ENCODE measurements at regions of chr17 and their contacts with region 1.

Region 1: GRCh38 chr17:42067351-42068091 is 17.1 kb upstream of the C17orf113 start:
- DNase-seq: peak; percentile 48 to 67
- ATAC-seq: peak in 4 of 8 donors; percentile 40 to 53 (median 42)
- H3K4me3 ChIP-seq: no peak overlapping the region
- H3K27ac ChIP-seq: no peak overlapping the region
- H3K4me1 ChIP-seq: peaks cover 0 to 17% (median 6%) of the 10 kb centered on the region in 9 donors
- H3K27me3 ChIP-seq: peaks cover 0 to 21% (median 17%) of the 10 kb centered on the region in 7 donors
- CTCF ChIP-seq: peak; percentile 78 to 96 (median 88)

Region 2: DNA sequence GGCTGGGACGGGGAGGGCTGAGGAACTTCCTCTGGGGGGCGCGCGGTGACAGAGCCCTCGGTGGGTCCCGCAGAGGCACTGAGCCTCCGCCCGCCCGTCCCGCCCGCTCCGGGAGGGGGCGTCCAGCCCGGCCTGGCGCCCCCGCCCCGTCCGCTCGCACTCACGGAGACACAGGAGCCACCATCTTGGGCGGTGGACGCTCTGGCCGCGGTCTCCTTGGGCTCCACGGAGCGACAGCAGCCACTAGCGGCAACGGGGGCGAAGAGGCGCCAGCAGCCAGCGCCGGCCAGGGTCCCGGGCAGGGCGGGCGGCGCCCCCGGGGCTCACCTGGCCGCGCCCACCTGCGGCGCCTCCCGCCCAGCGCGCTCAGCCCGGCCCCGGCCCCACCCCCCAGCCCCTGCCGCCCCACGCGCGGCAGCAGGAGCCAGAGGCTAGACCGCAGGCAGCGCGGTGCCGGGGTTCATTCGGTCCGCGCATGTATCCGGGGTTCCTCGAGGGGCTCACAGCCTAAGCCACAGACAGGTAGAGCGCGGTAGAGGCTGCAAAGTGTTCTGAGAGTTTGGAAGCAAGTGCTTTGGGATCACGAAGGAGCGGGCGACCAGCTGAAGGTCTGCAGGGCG is 17.0 kb before region 1 on chr17 and contains the start of gene C17orf113:
- intact Hi-C with region 1: loop called in 1 of 10 experiments (anchors 1 kb)
- DNase-seq: peak; percentile 50 to 59
- ATAC-seq: peak; percentile 65 to 90 (median 79)
- H3K4me3 ChIP-seq: peak within 1 kb of the TSS; percentile 48 to 97 (median 75)
- H3K27ac ChIP-seq: peak within 1 kb of the TSS in 5 of 10 donors; percentile 32 to 71 (median 41)
- H3K4me1 ChIP-seq: peaks cover 0 to 13% (median 7%) of the 10 kb centered on the region in 9 donors
- H3K27me3 ChIP-seq: peaks cover 4 to 34% (median 28%) of the 10 kb centered on the region in 7 donors
- CTCF ChIP-seq: peak in 8 of 9 donors; percentile 11 to 57 (median 44)
- total RNA-seq, gene C17orf113: 0.46 to 1.2 (median 0.88) TPM

Region 3: DNA sequence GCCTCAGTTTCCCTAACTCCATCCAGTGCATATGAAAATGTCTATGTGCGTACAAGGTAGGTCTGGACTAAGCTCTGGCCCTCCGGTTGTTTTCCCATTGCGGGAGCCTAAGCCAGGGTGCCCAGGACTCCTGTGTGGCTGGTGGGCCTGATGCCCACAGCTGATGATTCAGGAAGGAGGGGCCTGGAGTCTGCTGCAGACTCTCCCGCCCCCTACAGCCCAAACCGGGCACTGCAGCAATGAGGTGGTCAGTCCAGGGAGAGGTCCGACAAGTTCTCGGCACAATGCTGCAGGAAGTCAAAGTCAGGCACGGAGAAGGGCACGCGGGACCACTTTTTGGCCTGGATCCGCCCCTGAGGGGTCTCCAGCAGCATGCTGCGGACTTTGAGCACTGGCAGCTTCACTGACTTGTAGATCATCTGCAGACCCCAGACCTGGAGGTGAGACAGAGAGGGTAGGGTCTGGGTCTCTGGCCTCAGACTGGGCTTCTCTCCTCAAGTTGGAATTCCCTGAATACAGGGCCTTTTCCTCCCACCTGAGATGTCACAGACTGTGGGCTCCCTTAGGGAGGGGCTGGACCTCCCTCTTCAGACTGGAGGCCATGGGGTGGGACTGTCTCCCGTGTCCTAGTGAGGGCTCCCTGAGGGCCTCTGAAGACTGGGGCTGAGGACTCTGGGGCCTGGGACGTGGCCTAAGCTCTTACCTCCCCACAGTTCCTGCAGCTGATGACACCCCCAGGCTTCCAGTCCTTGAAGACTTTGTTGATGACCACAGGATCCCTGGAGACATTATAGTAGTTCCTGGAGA is 34.2 kb after region 1 on chr17:
- intact Hi-C with region 1: loop called in 6 of 10 experiments (anchors 5 kb)
- DNase-seq: peak; percentile 71 to 85
- ATAC-seq: peak; percentile 63 to 87 (median 82)
- H3K4me3 ChIP-seq: no peak overlapping the region
- H3K27ac ChIP-seq: no peak overlapping the region
- H3K4me1 ChIP-seq: peaks cover 0 to 17% (median 10%) of the 10 kb centered on the region in 9 donors
- H3K27me3 ChIP-seq: peaks cover 2 to 21% (median 19%) of the 10 kb centered on the region in 7 donors
- CTCF ChIP-seq: peak; percentile 69 to 89 (median 83)

Region 4: GRCh38 chr17:42112552-42113176 is 45.1 kb after region 1 on chr17 and contains the start of gene DHX58:
- intact Hi-C with region 1: loop called in 4 of 10 experiments (anchors 2 to 5 kb)
- DNase-seq: peak; percentile 56 to 82
- ATAC-seq: peak; percentile 65 to 93 (median 85)
- H3K4me3 ChIP-seq: peak within 1 kb of the TSS; percentile 16 to 69 (median 62)
- H3K27ac ChIP-seq: peak within 1 kb of the TSS; percentile 69 to 93 (median 90)
- H3K4me1 ChIP-seq: peaks cover 7 to 37% (median 17%) of the 10 kb centered on the region in 9 donors
- H3K27me3 ChIP-seq: no peaks in the 10 kb centered on the region
- CTCF ChIP-seq: peak in 1 of 9 donors; percentile 9
- total RNA-seq, gene DHX58: 2.2 to 8.4 (median 4.0) TPM